Prostate gland (tissue), 2 donors: ENCODE measurements at regions of chr5 and their contacts with region 1.

Region 1: GRCh38 chr5:59356813-59357380 is 536.6 kb downstream of the PDE4D start:
- DNase-seq: no peak
- H3K4me3 ChIP-seq: no peak overlapping the region
- H3K27ac ChIP-seq: peak overlapping the region in 1 of 2 donors; percentile 1
- H3K4me1 ChIP-seq: no peaks in the 10 kb centered on the region
- H3K27me3 ChIP-seq: no peaks in the 10 kb centered on the region
- CTCF ChIP-seq: no peak
- POLR2A ChIP-seq: no peak

Region 2: GRCh38 chr5:59272809-59273427 is 84.0 kb before region 1 on chr5:
- intact Hi-C with region 1: loop called (anchors 5 kb)
- DNase-seq: no peak
- H3K4me3 ChIP-seq: peak overlapping the region; percentile 35 to 43
- H3K27ac ChIP-seq: peak overlapping the region; percentile 87 to 89
- H3K4me1 ChIP-seq: no peaks in the 10 kb centered on the region
- H3K27me3 ChIP-seq: no peaks in the 10 kb centered on the region
- CTCF ChIP-seq: no peak
- POLR2A ChIP-seq: no peak

Region 3: GRCh38 chr5:59923465-59923864 is 566.6 kb after region 1 on chr5:
- intact Hi-C with region 1: no loop called
- DNase-seq: no peak
- H3K4me3 ChIP-seq: no peak overlapping the region
- H3K27ac ChIP-seq: no peak overlapping the region
- H3K4me1 ChIP-seq: no peaks in the 10 kb centered on the region
- H3K27me3 ChIP-seq: no peaks in the 10 kb centered on the region
- CTCF ChIP-seq: no peak
- POLR2A ChIP-seq: no peak

Region 4: DNA sequence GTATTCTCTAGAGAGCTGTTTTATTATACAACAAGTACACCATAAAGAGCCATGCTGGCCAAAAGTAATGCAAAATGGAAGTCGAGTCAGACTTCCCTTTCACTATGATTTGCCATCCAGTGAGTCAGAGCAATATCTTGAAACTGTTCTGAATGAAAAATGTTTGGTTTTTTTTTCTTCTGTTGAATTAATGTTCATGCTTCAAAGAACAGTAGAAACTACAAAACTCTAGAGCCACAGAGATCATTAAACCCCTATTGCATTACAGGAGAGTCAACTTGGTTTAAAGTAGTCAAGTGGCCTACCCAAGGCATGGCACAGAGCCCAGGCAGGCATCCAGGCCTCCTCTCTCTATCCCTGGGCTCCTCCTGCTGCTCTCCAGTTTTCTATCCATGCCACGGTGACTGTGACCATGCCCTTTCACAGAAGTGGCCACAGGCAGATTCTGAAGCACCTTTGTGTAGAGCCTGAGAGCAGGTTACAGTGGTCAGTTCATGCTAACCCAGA is 984.1 kb after region 1 on chr5:
- intact Hi-C with region 1: no loop called
- DNase-seq: no peak
- H3K4me3 ChIP-seq: no peak overlapping the region
- H3K27ac ChIP-seq: no peak overlapping the region
- H3K4me1 ChIP-seq: no peaks in the 10 kb centered on the region
- H3K27me3 ChIP-seq: no peaks in the 10 kb centered on the region
- CTCF ChIP-seq: no peak
- POLR2A ChIP-seq: no peak